MCF 10A (cell line): ENCODE measurements at regions of chr5 and their contacts with region 1.

Region 1: DNA sequence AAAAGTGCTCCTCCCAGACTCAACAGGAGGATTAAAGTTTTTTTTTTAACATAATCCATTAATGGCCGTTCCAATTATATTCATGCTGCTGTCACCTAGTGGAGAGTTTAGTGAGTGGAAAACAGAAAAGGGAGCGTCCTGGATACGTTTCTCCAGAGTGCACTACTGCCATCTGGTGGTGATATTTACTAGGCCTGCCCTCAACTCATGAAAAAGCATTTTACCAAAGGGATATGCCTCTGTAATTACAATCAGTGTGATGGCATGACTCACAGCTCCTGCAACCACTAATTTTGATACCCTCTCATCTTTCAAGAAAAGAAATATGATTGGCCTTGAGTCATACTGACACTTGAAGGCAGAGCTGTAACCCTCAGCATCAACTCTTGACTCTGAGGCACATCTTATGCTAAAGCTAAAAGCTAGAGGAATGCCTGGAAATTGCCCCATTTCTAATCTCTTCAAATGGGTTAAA is 20.0 kb downstream of the MINAR2 start:
- DNase-seq: peak; percentile 97
- H3K4me3 Mint-ChIP-seq: no peak overlapping the region
- H3K27ac Mint-ChIP-seq: no peak overlapping the region
- H3K4me1 Mint-ChIP-seq: peaks cover 5% of the 10 kb centered on the region
- H3K27me3 Mint-ChIP-seq: no peaks in the 10 kb centered on the region
- CTCF ChIP-seq: peak; percentile 99

Region 2: GRCh38 chr5:128213340-128213739 is 1554.6 kb before region 1 on chr5:
- CTCF ChIA-PET with region 1: interaction called, 4 read pairs
- POLR2A ChIA-PET with region 1: no interaction called
- intact Hi-C with region 1: loop called (anchors 5 kb)
- DNase-seq: peak; percentile 78
- H3K4me3 Mint-ChIP-seq: no peak overlapping the region
- H3K27ac Mint-ChIP-seq: no peak overlapping the region
- H3K4me1 Mint-ChIP-seq: peaks cover 11% of the 10 kb centered on the region
- H3K27me3 Mint-ChIP-seq: no peaks in the 10 kb centered on the region
- CTCF ChIP-seq: peak; percentile 96

Region 3: DNA sequence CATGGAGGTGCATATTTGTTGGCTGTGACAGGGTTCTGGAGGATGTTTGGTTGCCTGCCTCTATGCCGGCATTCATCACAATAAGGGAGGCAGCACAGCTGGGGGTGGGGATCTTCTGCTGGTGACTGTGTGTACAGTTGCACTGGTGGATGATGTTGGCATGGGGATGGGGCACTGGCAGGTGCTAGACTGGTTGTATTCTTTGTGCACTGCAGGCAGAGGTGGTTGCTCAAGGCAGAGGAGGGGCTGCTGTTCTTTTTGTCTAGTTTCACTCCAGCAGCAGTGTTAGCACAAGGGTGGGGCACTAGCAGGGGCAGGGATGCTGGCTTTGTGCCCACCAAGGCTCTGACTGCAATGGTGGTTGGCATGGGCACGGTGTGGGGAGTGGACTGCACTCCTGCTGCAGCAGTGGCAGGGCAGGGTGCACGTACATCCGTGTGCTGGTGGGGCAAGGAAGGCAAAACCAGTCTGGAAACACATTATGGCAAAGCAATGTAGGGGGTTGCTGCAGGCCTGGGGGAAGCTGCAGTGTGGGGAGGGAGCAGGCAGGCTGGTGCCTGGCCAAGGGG is 604.0 kb before region 1 on chr5:
- CTCF ChIA-PET with region 1: interaction called, 10 read pairs
- POLR2A ChIA-PET with region 1: no interaction called
- intact Hi-C with region 1: no loop called
- DNase-seq: no peak
- H3K4me3 Mint-ChIP-seq: no peak overlapping the region
- H3K27ac Mint-ChIP-seq: no peak overlapping the region
- H3K4me1 Mint-ChIP-seq: no peaks in the 10 kb centered on the region
- H3K27me3 Mint-ChIP-seq: peaks cover 22% of the 10 kb centered on the region
- CTCF ChIP-seq: no peak

Region 4: DNA sequence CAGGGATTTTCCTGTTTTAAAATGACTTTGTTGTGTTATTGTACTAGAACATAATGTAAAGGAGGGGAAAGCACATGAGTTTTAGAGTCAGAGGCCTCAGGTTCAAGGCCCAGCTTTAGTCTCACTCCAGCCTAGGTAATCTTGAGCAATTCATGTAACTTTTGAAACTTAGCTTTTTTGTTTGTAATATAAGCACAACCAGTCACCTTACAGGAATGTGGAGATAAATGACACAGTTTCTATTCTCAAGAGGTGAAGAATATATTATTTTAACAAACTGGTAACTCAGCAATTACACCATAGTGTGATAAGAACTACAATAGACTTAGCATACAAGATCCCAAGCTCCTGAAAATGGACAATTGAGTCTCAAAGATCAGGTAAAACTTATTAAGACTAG is 256.7 kb before region 1 on chr5:
- CTCF ChIA-PET with region 1: interaction called, 10 read pairs
- POLR2A ChIA-PET with region 1: no interaction called
- intact Hi-C with region 1: no loop called
- DNase-seq: peak; percentile 26
- H3K4me3 Mint-ChIP-seq: no peak overlapping the region
- H3K27ac Mint-ChIP-seq: no peak overlapping the region
- H3K4me1 Mint-ChIP-seq: peaks cover 6% of the 10 kb centered on the region
- H3K27me3 Mint-ChIP-seq: peaks cover 12% of the 10 kb centered on the region
- CTCF ChIP-seq: no peak

Region 5: GRCh38 chr5:129804705-129805104 is 36.8 kb after region 1 on chr5:
- CTCF ChIA-PET with region 1: interaction called, 41 read pairs
- POLR2A ChIA-PET with region 1: no interaction called
- intact Hi-C with region 1: no loop called
- DNase-seq: no peak
- H3K4me3 Mint-ChIP-seq: no peak overlapping the region
- H3K27ac Mint-ChIP-seq: no peak overlapping the region
- H3K4me1 Mint-ChIP-seq: peaks cover 6% of the 10 kb centered on the region
- H3K27me3 Mint-ChIP-seq: no peaks in the 10 kb centered on the region
- CTCF ChIP-seq: no peak

Region 6: GRCh38 chr5:130077007-130077406 is 309.1 kb after region 1 on chr5:
- CTCF ChIA-PET with region 1: interaction called, 5 read pairs
- POLR2A ChIA-PET with region 1: no interaction called
- intact Hi-C with region 1: loop called (anchors 5 kb)
- DNase-seq: peak; percentile 10
- H3K4me3 Mint-ChIP-seq: no peak overlapping the region
- H3K27ac Mint-ChIP-seq: no peak overlapping the region
- H3K4me1 Mint-ChIP-seq: no peaks in the 10 kb centered on the region
- H3K27me3 Mint-ChIP-seq: no peaks in the 10 kb centered on the region
- CTCF ChIP-seq: peak; percentile 16